ENCODE measurements at regions of chr15 and their contacts with region 1.

Region 1: DNA sequence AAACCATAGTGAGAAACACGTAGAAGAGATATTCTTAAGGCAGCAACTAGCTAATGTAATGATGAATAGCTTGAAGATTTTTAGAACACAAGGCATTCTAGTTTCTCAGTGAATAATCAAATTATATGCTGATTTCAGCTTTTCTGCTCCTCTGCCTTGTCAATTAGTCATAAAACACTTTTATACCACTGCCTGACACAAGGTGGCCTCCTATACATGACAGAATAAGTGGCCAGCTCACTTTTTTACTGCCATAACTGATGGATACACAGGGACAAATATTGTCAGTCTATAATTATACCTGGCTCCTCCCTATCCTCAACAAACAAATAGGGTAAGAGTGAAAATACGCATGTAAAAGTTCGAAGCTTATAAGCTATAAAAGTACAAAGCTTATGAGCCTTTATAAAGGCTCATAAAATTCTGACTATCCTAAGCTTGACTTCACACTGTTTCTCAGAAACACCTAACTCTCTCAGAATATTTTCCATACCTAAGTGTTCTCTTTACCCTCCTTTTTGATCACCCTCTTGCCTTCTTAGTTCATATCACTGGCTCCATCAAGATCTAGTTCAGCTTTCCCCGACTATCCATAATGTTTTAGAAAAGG is 81.6 kb downstream of the HERC1 start:
- DNase-seq: peak in 1 of 2 donors; percentile 27
- ATAC-seq: peak; percentile 90 to 91
- H3K4me3 ChIP-seq: no peak overlapping the region
- H3K27ac ChIP-seq: peak overlapping the region; percentile 29 to 66 (median 50)
- H3K4me1 ChIP-seq: peaks cover 0 to 13% of the 10 kb centered on the region in 2 donors
- H3K27me3 ChIP-seq: no peaks in the 10 kb centered on the region
- CTCF ChIP-seq: peak; percentile 77 to 82 (median 79)
- POLR2A ChIP-seq: no peak

Region 2: DNA sequence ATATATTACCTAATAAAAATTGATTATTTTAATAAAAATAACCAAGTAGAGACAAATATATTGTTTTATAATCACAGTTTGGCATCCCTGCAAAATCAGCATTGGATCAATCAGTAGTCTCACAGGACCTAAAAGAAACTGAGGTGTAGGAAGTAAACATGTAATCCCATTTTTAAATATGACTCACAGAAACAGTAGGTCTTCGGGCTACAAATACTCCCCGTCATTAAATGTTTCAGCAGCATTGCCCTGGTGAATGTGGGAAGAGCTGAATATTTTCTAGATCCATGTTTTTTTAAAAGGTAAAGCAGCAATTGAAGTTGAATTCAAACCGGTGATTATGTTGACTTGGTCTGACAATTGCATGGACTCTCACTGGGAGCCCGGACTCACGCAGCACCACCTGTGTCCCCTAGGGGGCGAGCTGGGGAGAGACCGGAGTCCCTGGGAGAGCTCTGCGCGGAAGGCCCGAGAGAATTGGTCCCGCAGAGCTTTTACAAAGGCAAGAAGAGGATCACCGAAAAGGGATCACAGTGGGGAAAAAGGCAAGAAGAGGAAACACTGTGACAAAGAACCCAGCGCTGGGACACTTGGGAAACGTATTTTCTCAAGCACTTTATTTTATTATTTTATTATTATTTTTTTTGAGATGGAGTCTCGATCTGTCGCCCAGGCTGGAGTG is 265.0 kb before region 1 on chr15:
- in situ Hi-C with region 1: no loop called
- intact Hi-C with region 1: no loop called
- DNase-seq: peak; percentile 70 to 78
- ATAC-seq: peak; percentile 88 to 90
- H3K4me3 ChIP-seq: no peak overlapping the region
- H3K27ac ChIP-seq: no peak overlapping the region
- H3K4me1 ChIP-seq: no peaks in the 10 kb centered on the region
- H3K27me3 ChIP-seq: no peaks in the 10 kb centered on the region
- CTCF ChIP-seq: peak; percentile 76 to 94 (median 82)
- POLR2A ChIP-seq: no peak

Region 3: GRCh38 chr15:64153480-64154367 is 401.5 kb after region 1 on chr15:
- in situ Hi-C with region 1: no loop called
- intact Hi-C with region 1: loop called (anchors 10 kb)
- DNase-seq: peak; percentile 75 to 80
- ATAC-seq: peak; percentile 87 to 91
- H3K4me3 ChIP-seq: no peak overlapping the region
- H3K27ac ChIP-seq: peak overlapping the region; percentile 5 to 46 (median 26)
- H3K4me1 ChIP-seq: peaks cover 16 to 27% of the 10 kb centered on the region in 2 donors
- H3K27me3 ChIP-seq: peaks cover 12 to 19% (median 18%) of the 10 kb centered on the region in 3 donors
- CTCF ChIP-seq: peak; percentile 82 to 99 (median 95)
- POLR2A ChIP-seq: no peak